ENCODE measurements at regions of chr7 and their contacts with region 1.

Region 1: DNA sequence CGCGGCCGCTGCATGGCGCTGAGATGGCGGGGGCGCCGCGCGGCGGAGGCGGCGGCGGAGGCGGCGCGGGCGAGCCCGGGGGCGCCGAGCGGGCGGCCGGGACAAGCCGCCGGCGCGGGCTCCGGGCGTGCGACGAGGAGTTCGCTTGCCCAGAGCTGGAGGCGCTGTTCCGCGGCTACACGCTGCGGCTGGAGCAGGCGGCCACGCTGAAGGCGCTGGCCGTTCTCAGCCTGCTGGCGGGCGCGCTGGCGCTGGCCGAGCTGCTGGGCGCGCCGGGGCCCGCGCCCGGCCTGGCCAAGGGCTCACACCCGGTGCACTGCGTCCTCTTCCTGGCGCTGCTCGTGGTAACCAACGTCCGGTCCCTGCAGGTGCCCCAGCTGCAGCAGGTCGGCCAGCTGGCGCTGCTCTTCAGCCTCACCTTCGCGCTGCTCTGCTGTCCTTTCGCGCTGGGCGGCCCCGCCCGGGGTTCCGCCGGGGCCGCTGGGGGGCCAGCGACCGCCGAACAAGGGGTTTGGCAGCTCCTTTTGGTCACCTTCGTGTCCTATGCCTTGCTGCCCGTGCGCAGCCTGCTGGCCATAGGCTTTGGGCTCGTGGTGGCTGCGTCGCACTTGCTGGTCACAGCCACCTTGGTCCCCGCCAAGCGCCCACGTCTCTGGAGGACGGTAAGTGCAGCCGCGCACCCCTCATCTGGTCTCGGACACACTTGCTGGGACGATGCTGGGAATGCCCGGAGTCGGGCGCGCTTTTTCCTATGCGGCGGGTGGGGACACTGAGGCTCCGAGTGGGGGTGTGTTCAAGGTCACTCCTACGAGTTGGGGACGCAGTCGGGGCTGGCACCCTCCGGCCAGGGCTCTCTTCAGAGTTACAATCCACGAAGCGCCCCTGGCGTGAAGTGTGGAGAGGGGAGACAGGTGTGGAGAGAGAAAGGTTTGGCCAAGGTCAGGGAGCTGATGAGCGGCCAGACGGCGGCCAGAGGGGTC is 643 bp downstream of the ADCY1 start:
- DNase-seq: peak in 1 of 10 donors; percentile 46
- H3K4me3 ChIP-seq: peak overlapping the region; percentile 43 to 81 (median 68)
- H3K27ac ChIP-seq: peak overlapping the region in 45 of 59 donors; percentile 3 to 88 (median 67)
- H3K27me3 ChIP-seq: peaks cover 0 to 42% (median 11%) of the 10 kb centered on the region in 45 donors
- CTCF ChIP-seq: no peak

Region 2: GRCh38 chr7:45171946-45172345 is 402.9 kb before region 1 on chr7:
- intact Hi-C with region 1: no loop called
- DNase-seq: peak in 3 of 10 donors; percentile 20 to 22 (median 21)
- H3K4me3 ChIP-seq: no peak overlapping the region
- H3K27ac ChIP-seq: no peak overlapping the region
- H3K27me3 ChIP-seq: no peaks in the 10 kb centered on the region
- CTCF ChIP-seq: no peak

Region 3: GRCh38 chr7:45402480-45403218 is 172.2 kb before region 1 on chr7:
- intact Hi-C with region 1: loop called in 1 of 2 experiments (anchors 10 kb)
- DNase-seq: no peak
- H3K4me3 ChIP-seq: no peak overlapping the region
- H3K27ac ChIP-seq: no peak overlapping the region
- H3K27me3 ChIP-seq: no peaks in the 10 kb centered on the region
- CTCF ChIP-seq: no peak

Measured in dorsolateral prefrontal cortex (tissue), 120 donors.